ENCODE measurements at regions of chr6 and their contacts with region 1.

Region 1: GRCh38 chr6:42555477-42556457 is 8.1 kb upstream of the UBR2 start:
- DNase-seq: no peak
- CTCF ChIP-seq: no peak

Region 2: DNA sequence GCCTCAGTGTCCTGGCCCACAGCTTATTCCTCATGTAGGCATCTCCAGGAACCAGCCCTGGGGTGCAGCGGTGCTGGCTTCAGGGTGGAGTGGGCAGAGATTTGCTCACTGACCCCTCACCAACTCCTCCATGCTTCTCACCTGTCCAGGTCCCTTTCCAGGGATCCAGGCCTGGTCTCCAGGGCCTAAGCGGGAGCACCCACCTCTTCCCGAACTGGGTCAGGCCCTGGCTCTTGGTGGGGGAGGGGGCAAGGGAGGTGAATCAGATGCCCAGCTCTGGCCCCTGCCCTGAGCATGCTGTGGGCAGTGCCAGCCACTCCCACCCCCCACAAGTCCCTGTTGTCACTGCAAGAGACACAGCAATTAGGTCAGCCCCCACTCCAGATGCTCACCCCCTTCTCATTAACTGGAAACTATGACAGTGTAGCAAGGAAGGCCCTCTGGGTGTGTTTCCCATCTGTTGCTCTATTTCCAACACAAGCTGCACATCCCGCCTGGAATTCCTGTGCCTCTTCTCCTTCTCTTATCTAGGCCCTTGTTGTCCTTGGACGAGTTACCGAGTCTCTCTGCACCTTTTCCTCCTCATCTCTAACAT is 880.5 kb before region 1 on chr6:
- in situ Hi-C with region 1: no loop called
- DNase-seq: no peak
- CTCF ChIP-seq: no peak

Region 3: GRCh38 chr6:42260972-42261371 is 294.8 kb before region 1 on chr6:
- in situ Hi-C with region 1: loop called (anchors 10 kb)
- DNase-seq: peak; percentile 73
- CTCF ChIP-seq: no peak

Measured in GM13976 (cell line).